A673 (cell line): ENCODE measurements at regions of chr6 and their contacts with region 1.

Region 1: GRCh38 chr6:135675862-135676261 is 175.6 kb upstream of the PDE7B start:
- DNase-seq: peak; percentile 74
- H3K4me3 ChIP-seq: no peak overlapping the region
- H3K27ac ChIP-seq: no peak overlapping the region
- H3K4me1 ChIP-seq: peaks cover 16% of the 10 kb centered on the region
- H3K27me3 ChIP-seq: no peaks in the 10 kb centered on the region
- CTCF ChIP-seq: peak; percentile 55

Region 2: DNA sequence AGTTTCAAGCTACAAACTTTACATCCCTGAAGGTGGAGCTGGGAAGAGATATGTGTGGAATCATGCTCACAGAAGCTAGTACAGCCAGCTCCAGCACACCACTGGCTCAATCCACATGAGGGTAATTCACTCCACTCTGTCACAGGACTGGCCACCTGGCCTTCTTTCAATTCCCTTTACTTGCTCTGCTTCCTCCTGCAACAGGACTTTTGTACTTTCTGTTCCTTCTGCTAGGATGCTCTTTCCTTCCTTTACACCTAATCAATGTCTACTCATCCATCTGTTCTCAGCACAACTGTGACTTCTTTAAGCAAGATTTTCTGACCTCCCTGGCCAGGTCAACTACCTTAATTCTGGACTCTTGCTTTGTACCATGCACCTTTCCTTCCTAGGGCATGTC is 534.1 kb before region 1 on chr6:
- CTCF ChIA-PET with region 1: no interaction called
- POLR2A ChIA-PET with region 1: no interaction called
- intact Hi-C with region 1: no loop called
- DNase-seq: no peak
- H3K4me3 ChIP-seq: no peak overlapping the region
- H3K27ac ChIP-seq: no peak overlapping the region
- H3K4me1 ChIP-seq: peaks cover 13% of the 10 kb centered on the region
- H3K27me3 ChIP-seq: no peaks in the 10 kb centered on the region
- CTCF ChIP-seq: no peak

Region 3: GRCh38 chr6:135233686-135234489 is 442.0 kb before region 1 on chr6:
- CTCF ChIA-PET with region 1: no interaction called
- POLR2A ChIA-PET with region 1: no interaction called
- intact Hi-C with region 1: no loop called
- DNase-seq: no peak
- H3K4me3 ChIP-seq: no peak overlapping the region
- H3K27ac ChIP-seq: no peak overlapping the region
- H3K4me1 ChIP-seq: no peaks in the 10 kb centered on the region
- H3K27me3 ChIP-seq: no peaks in the 10 kb centered on the region
- CTCF ChIP-seq: no peak

Region 4: DNA sequence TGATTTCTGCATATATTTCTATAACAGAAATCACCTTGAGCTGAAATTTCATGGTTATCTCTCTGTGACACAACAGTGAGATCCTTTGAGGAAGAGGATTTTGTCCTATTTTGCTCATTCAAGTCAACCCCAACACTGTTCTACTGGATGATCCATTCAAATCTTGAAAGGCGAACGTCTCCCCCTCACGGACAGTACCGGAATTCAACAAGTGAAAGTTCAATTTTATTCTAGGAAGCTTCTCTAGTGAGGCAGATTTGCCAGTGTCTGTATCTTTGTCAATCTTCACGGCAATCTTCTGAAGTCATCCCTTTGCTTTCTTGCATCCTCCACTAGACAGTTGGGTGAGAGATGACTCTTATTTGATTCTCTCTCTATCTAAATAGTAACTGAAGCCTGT is 84.0 kb after region 1 on chr6:
- CTCF ChIA-PET with region 1: no interaction called
- POLR2A ChIA-PET with region 1: no interaction called
- intact Hi-C with region 1: loop called (anchors 1 kb)
- DNase-seq: peak; percentile 59
- H3K4me3 ChIP-seq: no peak overlapping the region
- H3K27ac ChIP-seq: no peak overlapping the region
- H3K4me1 ChIP-seq: no peaks in the 10 kb centered on the region
- H3K27me3 ChIP-seq: peaks cover 10% of the 10 kb centered on the region
- CTCF ChIP-seq: peak; percentile 52

Region 5: DNA sequence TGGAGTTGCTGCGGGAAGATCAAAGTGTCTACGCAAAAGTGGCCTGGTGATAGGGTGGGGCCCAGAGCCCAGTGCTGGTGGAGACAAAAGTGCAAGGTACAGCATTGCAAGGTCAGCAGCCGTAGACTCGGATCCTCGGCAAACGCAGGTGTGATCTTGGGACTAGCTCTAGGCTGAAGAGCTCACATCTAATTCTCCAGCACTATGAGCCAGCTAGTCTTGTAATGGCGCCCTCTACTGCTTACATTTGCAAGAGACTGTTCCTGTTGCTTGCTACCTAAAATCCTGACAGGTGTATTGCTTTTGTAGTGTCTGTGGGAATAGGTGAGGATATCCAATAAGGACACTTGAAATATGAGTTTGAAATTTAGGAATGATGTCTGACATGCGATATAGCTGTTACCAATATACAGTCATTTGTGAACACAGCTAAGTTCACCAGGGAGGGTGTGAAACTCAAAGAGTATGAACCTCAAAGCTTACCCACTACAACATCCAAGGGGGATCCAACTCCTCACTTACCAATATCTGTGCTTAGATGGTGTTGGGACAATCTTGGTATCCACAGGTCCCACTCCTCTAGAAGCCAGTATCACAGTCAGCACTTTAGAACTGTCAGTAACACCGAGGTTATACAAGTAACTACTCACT is 234.0 kb after region 1 on chr6:
- CTCF ChIA-PET with region 1: no interaction called
- POLR2A ChIA-PET with region 1: no interaction called
- intact Hi-C with region 1: loop called (anchors 5 kb)
- DNase-seq: peak; percentile 60
- H3K4me3 ChIP-seq: no peak overlapping the region
- H3K27ac ChIP-seq: no peak overlapping the region
- H3K4me1 ChIP-seq: no peaks in the 10 kb centered on the region
- H3K27me3 ChIP-seq: peaks cover 4% of the 10 kb centered on the region
- CTCF ChIP-seq: peak; percentile 81

Region 6: DNA sequence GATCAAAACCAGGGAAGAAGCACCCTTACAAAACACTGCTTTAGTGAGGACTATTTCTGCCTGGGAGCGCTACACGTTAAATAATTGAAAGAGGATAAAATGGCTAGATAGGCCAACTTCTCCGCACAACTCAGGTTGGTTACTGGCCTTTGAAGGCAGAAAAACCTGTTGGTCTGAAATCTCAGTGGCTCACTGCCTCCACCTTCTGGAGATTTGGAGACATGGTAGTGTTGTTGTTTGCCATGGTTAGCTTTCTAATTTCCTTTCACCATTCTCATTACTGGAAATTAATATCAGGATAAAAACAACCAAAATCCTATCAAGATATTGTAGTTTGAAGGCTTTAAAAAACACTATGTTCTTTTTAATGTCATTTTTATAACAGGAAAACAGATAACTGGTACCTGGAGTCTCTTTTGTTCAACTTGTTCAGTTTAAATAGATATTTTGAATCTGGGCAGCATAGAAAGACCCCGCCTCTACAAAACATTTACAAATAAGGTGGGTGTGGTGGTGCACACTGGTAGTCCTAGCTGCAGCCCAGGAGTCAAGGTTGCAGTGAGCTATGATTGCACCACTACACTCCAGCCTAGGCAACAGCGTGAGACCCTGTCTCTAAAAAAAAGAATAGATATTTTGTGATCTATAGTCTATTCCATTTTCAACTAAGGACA is 641.3 kb after region 1 on chr6:
- CTCF ChIA-PET with region 1: no interaction called
- POLR2A ChIA-PET with region 1: no interaction called
- intact Hi-C with region 1: loop called (anchors 10 kb)
- DNase-seq: peak; percentile 59
- H3K4me3 ChIP-seq: no peak overlapping the region
- H3K27ac ChIP-seq: no peak overlapping the region
- H3K4me1 ChIP-seq: no peaks in the 10 kb centered on the region
- H3K27me3 ChIP-seq: peaks cover 4% of the 10 kb centered on the region
- CTCF ChIP-seq: peak; percentile 77

Region 7: GRCh38 chr6:136527831-136528230 is 852.0 kb after region 1 on chr6:
- CTCF ChIA-PET with region 1: no interaction called
- POLR2A ChIA-PET with region 1: no interaction called
- intact Hi-C with region 1: no loop called
- DNase-seq: no peak
- H3K4me3 ChIP-seq: no peak overlapping the region
- H3K27ac ChIP-seq: no peak overlapping the region
- H3K4me1 ChIP-seq: no peaks in the 10 kb centered on the region
- H3K27me3 ChIP-seq: no peaks in the 10 kb centered on the region
- CTCF ChIP-seq: no peak